ENCODE measurements at regions of chr12 and their contacts with region 1.

Region 1: GRCh38 chr12:56034589-56035332 is 7.0 kb upstream of the RPS26 start:
- DNase-seq: no peak
- CTCF ChIP-seq: no peak

Region 2: DNA sequence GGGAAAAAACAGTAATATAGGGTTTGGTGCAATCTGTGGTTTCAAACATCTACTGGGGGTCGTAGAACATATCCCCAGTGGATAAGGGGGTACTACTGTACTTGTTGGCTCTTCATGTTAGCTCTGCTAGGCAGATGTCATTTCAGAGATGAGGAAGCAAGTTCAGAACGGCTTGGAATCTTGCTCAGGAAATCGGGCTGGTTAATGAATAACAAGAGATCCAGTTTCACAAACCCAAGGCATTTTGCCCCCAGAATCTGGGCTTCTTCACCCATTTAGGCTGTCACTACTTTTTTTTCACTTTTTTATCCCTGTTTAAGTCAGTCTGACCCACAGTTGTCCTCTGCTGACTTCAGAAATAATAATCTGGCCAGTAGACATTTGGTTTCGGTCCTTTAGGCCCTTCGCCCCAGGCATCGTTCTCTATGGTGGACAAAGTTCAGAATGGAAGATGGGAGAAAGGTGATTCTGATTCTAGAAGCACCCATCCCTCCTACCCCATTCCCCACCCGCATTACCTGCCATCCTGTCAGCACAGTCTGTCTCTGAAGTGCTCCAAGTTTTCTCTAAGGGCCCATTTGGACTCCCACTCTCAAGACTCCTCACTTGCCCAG is 33.2 kb before region 1 on chr12:
- in situ Hi-C with region 1: loop called (anchors 5 kb)
- DNase-seq: no peak
- CTCF ChIP-seq: no peak

Measured in GM13977 (cell line).